MCF 10A (cell line): ENCODE measurements at regions of chr20 and their contacts with region 1.

Region 1: GRCh38 chr20:36605399-36606157 is at the start of gene RAB5IF:
- DNase-seq: peak; percentile 98
- H3K4me3 Mint-ChIP-seq: peak within 1 kb of the TSS; percentile 99
- H3K27ac Mint-ChIP-seq: peak within 1 kb of the TSS; percentile 98
- H3K4me1 Mint-ChIP-seq: peaks cover 4% of the 10 kb centered on the region
- H3K27me3 Mint-ChIP-seq: no peaks in the 10 kb centered on the region
- CTCF ChIP-seq: peak; percentile 90
- total RNA-seq, gene RAB5IF: 112 and 125 TPM in 2 replicates

Region 2: DNA sequence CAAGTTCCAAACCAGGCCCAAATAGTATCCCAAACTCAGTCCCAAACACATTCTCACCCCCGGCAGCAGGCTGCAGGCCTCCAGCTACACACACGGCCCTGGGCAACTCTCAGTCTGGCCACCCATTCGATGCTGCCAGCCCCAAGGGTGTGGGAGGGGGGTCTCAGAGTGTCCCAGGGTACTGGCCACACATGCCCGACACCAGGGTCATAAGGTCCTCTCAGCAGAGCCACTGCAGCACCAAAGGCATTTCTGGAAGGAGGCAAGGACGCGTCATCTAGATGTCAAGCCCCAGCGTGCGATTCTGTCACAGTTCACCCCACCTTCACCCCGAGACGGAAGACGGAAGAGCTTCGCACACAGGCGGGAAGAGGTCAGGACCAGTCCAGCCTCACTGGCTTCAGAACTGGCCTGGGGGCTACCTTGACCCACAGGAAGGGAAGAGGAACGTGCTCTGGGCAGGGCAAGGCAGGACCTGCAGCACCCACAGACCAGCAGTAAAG is 54.7 kb before region 1 on chr20:
- CTCF ChIA-PET with region 1: interaction called, 3 read pairs
- POLR2A ChIA-PET with region 1: no interaction called
- intact Hi-C with region 1: loop called (anchors 1 kb)
- DNase-seq: no peak
- H3K4me3 Mint-ChIP-seq: no peak overlapping the region
- H3K27ac Mint-ChIP-seq: no peak overlapping the region
- H3K4me1 Mint-ChIP-seq: no peaks in the 10 kb centered on the region
- H3K27me3 Mint-ChIP-seq: no peaks in the 10 kb centered on the region
- CTCF ChIP-seq: no peak

Region 3: DNA sequence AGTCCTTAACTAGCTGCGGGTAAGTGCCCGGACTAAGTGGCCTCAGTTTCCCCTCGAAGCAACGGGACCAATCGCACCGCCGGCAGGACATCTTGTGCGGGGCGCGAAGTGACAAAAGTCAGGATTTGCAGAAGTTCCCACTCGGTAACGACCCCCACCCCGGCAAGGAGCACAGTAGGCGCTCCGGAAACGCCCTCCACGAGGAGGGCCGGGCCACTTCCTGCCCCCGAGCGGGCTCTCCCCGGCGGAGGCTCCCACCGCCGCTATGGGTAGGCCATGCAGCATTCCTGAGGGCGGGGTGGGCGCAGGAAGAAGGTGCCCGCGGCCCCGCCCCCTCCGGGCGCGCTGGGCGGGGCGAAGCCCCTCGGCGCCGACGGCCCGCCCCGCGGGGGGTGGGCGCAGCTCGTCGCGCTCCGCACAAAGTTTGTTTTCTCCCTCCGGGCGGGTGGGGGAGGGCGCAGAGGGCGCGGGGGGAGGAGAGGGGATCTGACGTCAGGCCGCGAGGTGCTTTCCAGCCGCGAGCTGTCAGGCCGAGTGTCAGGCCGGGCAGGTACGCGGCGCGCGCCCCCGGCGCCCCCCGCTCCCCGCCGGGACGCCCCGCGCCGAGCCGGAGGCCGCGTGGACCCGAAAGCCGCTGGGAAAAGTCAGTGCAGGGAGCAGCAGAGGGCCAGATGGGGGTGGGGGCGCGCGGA is 32.3 kb before region 1 on chr20 and contains the start of gene TGIF2:
- CTCF ChIA-PET with region 1: interaction called, 27 read pairs
- POLR2A ChIA-PET with region 1: interaction called, 60 read pairs
- intact Hi-C with region 1: no loop called
- DNase-seq: peak; percentile 57
- H3K4me3 Mint-ChIP-seq: peak within 1 kb of the TSS; percentile 74
- H3K27ac Mint-ChIP-seq: peak within 1 kb of the TSS; percentile 87
- H3K4me1 Mint-ChIP-seq: peaks cover 19% of the 10 kb centered on the region
- H3K27me3 Mint-ChIP-seq: no peaks in the 10 kb centered on the region
- CTCF ChIP-seq: no peak
- total RNA-seq, gene TGIF2: 5.9 and 9.7 TPM in 2 replicates

Region 4: GRCh38 chr20:36585463-36586108 is 20.0 kb before region 1 on chr20:
- CTCF ChIA-PET with region 1: interaction called, 40 read pairs
- POLR2A ChIA-PET with region 1: interaction called, 67 read pairs
- intact Hi-C with region 1: no loop called
- DNase-seq: peak; percentile 80
- H3K4me3 Mint-ChIP-seq: no peak overlapping the region
- H3K27ac Mint-ChIP-seq: no peak overlapping the region
- H3K4me1 Mint-ChIP-seq: peaks cover 7% of the 10 kb centered on the region
- H3K27me3 Mint-ChIP-seq: no peaks in the 10 kb centered on the region
- CTCF ChIP-seq: no peak

Region 5: GRCh38 chr20:36745927-36746659 is 140.5 kb after region 1 on chr20 and contains the start of gene NDRG3:
- CTCF ChIA-PET with region 1: interaction called, 5 read pairs
- POLR2A ChIA-PET with region 1: interaction called, 43 read pairs
- intact Hi-C with region 1: no loop called
- DNase-seq: peak; percentile 89
- H3K4me3 Mint-ChIP-seq: peak within 1 kb of the TSS; percentile 86
- H3K27ac Mint-ChIP-seq: peak within 1 kb of the TSS; percentile 63
- H3K4me1 Mint-ChIP-seq: peaks cover 15% of the 10 kb centered on the region
- H3K27me3 Mint-ChIP-seq: no peaks in the 10 kb centered on the region
- CTCF ChIP-seq: no peak
- total RNA-seq, gene NDRG3: 7.5 and 10.3 TPM in 2 replicates

Region 6: GRCh38 chr20:36773597-36774390 is 168.2 kb after region 1 on chr20 and contains the start of gene DSN1:
- CTCF ChIA-PET with region 1: interaction called, 6 read pairs
- POLR2A ChIA-PET with region 1: interaction called, 19 read pairs
- intact Hi-C with region 1: no loop called
- DNase-seq: peak; percentile 96
- H3K4me3 Mint-ChIP-seq: peak within 1 kb of the TSS; percentile 79
- H3K27ac Mint-ChIP-seq: peak within 1 kb of the TSS; percentile 90
- H3K4me1 Mint-ChIP-seq: peaks cover 8% of the 10 kb centered on the region
- H3K27me3 Mint-ChIP-seq: no peaks in the 10 kb centered on the region
- CTCF ChIP-seq: no peak
- total RNA-seq, gene DSN1: 7.8 and 8.4 TPM in 2 replicates

Region 7: DNA sequence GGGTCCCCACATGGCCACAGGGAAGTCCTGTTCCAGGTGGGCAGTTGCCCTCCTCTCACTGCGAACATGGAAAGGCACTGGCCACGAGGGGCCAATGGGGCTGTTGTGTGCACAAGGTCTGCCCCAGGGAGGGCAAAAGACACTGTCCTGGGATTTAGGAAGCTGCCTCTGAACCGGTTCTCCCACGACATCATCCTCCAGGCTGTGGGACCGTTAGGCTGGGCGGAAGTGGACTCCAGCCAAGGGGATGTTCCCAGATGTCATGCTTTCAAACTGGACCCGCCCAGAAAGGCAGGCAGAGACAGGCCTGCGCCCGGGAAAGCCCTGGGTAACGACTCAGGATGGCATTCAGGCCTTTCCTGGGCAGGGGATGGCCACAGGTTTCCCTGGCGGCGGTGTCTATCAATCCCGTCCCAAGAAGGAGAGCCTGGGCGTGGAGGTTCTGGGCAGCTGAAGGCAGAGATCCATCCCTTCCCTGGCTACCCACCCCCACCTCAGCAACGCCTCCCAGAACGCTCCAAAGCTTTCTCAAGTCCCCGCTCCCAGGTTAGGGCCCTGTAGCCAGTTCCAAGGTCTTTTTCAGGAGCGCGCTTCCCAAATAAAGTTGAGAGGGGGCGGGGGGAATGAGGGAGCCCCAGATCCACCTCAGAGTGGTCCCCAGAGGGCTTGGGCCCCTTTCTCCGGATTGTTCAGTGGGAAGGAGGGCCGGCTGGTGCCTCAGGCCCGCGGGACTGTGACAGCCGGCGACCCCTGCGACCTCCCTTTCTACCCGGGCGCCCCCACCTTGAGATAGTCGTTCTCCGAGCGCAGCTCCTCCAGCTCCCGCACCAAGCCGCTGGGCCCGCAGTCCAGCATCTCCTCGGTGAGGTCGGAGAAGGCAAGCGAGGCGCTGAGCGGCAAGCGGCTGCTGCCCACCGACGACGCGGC is 256.6 kb after region 1 on chr20:
- CTCF ChIA-PET with region 1: interaction called, 3 read pairs
- POLR2A ChIA-PET with region 1: interaction called, 23 read pairs
- intact Hi-C with region 1: no loop called
- DNase-seq: peak; percentile 98
- H3K4me3 Mint-ChIP-seq: peak overlapping the region; percentile 76
- H3K27ac Mint-ChIP-seq: no peak overlapping the region
- H3K4me1 Mint-ChIP-seq: peaks cover 44% of the 10 kb centered on the region
- H3K27me3 Mint-ChIP-seq: no peaks in the 10 kb centered on the region
- CTCF ChIP-seq: no peak